ENCODE measurements at regions of chr15 and their contacts with region 1.

Region 1: GRCh38 chr15:101014921-101015841 is 96.0 kb downstream of the LRRK1 start:
- DNase-seq: peak; percentile 49
- H3K4me3 Mint-ChIP-seq: no peak overlapping the region
- H3K27ac Mint-ChIP-seq: no peak overlapping the region
- H3K4me1 Mint-ChIP-seq: peaks cover 5% of the 10 kb centered on the region
- H3K27me3 Mint-ChIP-seq: peaks cover 6% of the 10 kb centered on the region

Region 2: DNA sequence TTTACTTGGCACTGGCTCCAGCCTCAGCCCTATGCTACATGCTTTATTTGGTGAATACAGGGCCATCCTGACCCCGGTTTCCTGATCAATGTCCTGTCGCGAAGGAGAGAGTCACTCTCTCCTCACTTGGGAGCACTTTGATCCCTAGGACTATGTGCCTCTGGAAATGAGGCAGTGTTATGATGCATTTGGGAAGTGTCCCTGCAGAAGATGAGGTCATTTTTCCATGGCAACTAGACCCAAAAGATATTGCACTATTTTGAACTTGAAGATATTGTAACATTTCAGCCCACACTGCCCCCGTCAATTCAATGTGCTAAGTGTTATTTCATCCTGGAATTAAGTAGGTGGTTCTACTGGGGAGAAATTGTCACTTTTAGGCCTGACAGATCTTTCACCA is 28.0 kb before region 1 on chr15:
- intact Hi-C with region 1: no loop called
- DNase-seq: no peak
- H3K4me3 Mint-ChIP-seq: no peak overlapping the region
- H3K27ac Mint-ChIP-seq: no peak overlapping the region
- H3K4me1 Mint-ChIP-seq: no peaks in the 10 kb centered on the region
- H3K27me3 Mint-ChIP-seq: peaks cover 14% of the 10 kb centered on the region

Region 3: GRCh38 chr15:101258238-101259144 is 243.3 kb after region 1 on chr15:
- intact Hi-C with region 1: loop called (anchors 1 kb)
- DNase-seq: peak; percentile 26
- H3K4me3 Mint-ChIP-seq: no peak overlapping the region
- H3K27ac Mint-ChIP-seq: peak overlapping the region; percentile 5
- H3K4me1 Mint-ChIP-seq: peaks cover 37% of the 10 kb centered on the region
- H3K27me3 Mint-ChIP-seq: peaks cover 19% of the 10 kb centered on the region

Measured in activated T-helper 1 cell treated with anti-CD3 and anti-CD28 coated beads, Interleukin-12 subunit alpha, Interleukin-12 subunit beta, Interleukin-2, Interleukin-4 antibody, amounts not matched to agents 30 ng/mL and 10 ng/mL and 1 ng/mL, durations not matched to agents 14 hours and 24 hours and 36 hours (primary cell).